Naive thymus-derived CD4-positive, alpha-beta T cell (primary cell): ENCODE measurements at regions of chr10 and their contacts with region 1.

Region 1: DNA sequence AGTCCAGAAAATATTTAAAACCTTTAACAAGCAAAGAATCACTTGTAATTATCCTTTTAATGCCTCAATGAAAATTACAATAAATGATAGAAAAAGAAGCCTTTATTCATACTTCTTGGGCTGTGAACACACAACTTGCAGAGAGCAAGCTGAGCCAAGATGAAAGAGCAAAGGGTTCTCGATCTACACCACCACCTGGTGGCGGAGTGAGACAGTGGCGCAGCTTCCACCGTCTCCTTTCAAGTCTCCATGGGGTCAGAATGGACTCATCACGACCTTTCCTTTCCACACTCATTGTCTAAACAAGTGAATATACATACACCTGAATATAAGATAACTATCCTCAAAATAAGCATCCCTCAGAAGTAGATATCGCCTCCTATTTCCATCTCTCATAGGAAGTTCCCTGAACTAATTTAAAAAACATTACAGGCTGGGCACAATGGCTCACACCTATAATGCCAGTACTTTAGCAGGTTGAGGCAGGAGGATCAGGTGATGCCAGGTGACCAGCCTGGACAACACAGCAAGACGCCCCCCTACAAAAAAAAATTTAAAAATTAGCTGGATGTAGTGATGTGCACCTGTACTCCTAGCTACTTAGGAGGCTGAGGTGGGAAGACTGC is 40.7 kb downstream of the ATE1 start:
- DNase-seq: peak; percentile 8 to 34 (median 29)
- ATAC-seq: peak; percentile 69
- H3K4me3 ChIP-seq: no peak overlapping the region
- H3K4me3 Mint-ChIP-seq: no peak overlapping the region
- H3K27ac ChIP-seq: no peak overlapping the region
- H3K27ac Mint-ChIP-seq: peak overlapping the region in 1 of 9 donors; percentile 6
- H3K4me1 ChIP-seq: no peaks in the 10 kb centered on the region
- H3K4me1 Mint-ChIP-seq: peaks cover 0 to 8% (median 0%) of the 10 kb centered on the region in 7 donors
- H3K27me3 ChIP-seq: no peaks in the 10 kb centered on the region
- H3K27me3 Mint-ChIP-seq: no peaks in the 10 kb centered on the region

Region 2: DNA sequence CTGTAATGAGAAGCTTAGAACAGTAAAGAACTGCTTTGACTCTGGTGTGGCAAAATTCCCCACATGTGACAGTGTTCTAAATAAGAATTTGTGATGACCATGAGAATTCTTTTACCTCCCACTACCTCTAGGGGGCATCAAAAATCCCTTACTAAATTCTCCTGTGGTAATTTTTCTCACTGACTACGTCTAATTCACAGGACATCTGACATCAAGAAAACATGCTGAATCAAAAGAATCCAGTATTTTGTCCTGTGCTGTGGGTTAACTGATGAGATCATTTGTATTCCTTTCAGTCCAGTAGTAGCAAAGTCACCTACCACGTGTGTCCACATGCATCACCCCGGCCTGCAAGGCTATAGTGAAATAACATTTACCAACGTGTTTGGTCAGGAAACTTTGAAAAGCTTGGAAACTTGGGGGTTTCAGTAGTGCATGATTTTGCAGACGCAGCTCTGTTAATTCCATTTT is 63.1 kb before region 1 on chr10:
- CTCF ChIA-PET with region 1: no interaction called
- POLR2A ChIA-PET with region 1: no interaction called
- intact Hi-C with region 1: loop called in 1 of 2 experiments (anchors 1 kb)
- DNase-seq: peak in 3 of 9 donors; percentile 1 to 17 (median 3)
- ATAC-seq: no peak
- H3K4me3 ChIP-seq: no peak overlapping the region
- H3K4me3 Mint-ChIP-seq: no peak overlapping the region
- H3K27ac ChIP-seq: no peak overlapping the region
- H3K27ac Mint-ChIP-seq: no peak overlapping the region
- H3K4me1 ChIP-seq: no peaks in the 10 kb centered on the region
- H3K4me1 Mint-ChIP-seq: peaks cover 0 to 6% (median 0%) of the 10 kb centered on the region in 7 donors
- H3K27me3 ChIP-seq: no peaks in the 10 kb centered on the region
- H3K27me3 Mint-ChIP-seq: no peaks in the 10 kb centered on the region

Region 3: GRCh38 chr10:121959671-121960070 is 72.6 kb after region 1 on chr10:
- CTCF ChIA-PET with region 1: no interaction called
- POLR2A ChIA-PET with region 1: no interaction called
- intact Hi-C with region 1: no loop called
- DNase-seq: no peak
- ATAC-seq: no peak
- H3K4me3 ChIP-seq: no peak overlapping the region
- H3K4me3 Mint-ChIP-seq: no peak overlapping the region
- H3K27ac ChIP-seq: no peak overlapping the region
- H3K27ac Mint-ChIP-seq: no peak overlapping the region
- H3K4me1 ChIP-seq: no peaks in the 10 kb centered on the region
- H3K4me1 Mint-ChIP-seq: no peaks in the 10 kb centered on the region
- H3K27me3 ChIP-seq: no peaks in the 10 kb centered on the region
- H3K27me3 Mint-ChIP-seq: no peaks in the 10 kb centered on the region